ENCODE measurements at regions of chr9 and their contacts with region 1.

Region 1: DNA sequence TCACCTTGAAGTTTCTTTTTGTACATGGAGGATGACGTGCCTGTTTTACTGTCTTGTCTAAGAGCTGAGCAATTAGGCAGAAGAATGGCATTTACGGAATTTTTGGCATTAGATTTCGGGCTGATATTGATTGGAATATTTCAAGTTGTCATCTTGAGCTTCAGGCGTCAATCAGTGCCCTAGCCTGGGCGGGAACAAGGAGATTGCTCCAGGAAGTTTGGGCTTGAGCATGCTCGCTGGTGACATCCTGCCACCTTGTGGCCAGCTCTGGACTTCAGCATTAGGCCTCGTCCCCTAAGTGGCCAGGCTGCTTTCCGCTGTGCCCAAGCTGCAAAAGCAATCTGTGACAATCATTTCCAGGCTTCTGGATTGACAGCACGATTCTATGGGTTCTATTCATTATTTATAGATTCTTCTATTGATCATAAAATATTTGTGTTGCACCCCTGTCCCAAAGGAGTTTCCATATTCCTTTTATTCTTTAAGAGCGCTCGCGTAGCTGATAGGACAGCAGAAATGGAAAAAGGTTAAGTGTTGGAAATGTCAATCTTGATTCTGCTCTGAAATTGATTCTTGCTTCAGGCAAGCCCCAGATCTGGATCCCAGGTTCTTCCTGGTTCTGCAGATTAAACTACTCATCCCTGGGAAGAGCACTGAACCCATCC is 79.3 kb downstream of the SLC28A3 start:
- DNase-seq: peak; percentile 77
- H3K4me3 ChIP-seq: no peak overlapping the region
- H3K27ac ChIP-seq: no peak overlapping the region
- H3K4me1 ChIP-seq: no peaks in the 10 kb centered on the region
- H3K27me3 ChIP-seq: no peaks in the 10 kb centered on the region
- CTCF ChIP-seq: peak; percentile 62 to 87 (median 87)
- POLR2A ChIP-seq: no peak

Region 2: GRCh38 chr9:83081010-83081690 is 1180.1 kb before region 1 on chr9:
- intact Hi-C with region 1: no loop called
- DNase-seq: no peak
- H3K4me3 ChIP-seq: no peak overlapping the region
- H3K27ac ChIP-seq: no peak overlapping the region
- H3K4me1 ChIP-seq: no peaks in the 10 kb centered on the region
- H3K27me3 ChIP-seq: no peaks in the 10 kb centered on the region
- CTCF ChIP-seq: no peak
- POLR2A ChIP-seq: no peak

Region 3: DNA sequence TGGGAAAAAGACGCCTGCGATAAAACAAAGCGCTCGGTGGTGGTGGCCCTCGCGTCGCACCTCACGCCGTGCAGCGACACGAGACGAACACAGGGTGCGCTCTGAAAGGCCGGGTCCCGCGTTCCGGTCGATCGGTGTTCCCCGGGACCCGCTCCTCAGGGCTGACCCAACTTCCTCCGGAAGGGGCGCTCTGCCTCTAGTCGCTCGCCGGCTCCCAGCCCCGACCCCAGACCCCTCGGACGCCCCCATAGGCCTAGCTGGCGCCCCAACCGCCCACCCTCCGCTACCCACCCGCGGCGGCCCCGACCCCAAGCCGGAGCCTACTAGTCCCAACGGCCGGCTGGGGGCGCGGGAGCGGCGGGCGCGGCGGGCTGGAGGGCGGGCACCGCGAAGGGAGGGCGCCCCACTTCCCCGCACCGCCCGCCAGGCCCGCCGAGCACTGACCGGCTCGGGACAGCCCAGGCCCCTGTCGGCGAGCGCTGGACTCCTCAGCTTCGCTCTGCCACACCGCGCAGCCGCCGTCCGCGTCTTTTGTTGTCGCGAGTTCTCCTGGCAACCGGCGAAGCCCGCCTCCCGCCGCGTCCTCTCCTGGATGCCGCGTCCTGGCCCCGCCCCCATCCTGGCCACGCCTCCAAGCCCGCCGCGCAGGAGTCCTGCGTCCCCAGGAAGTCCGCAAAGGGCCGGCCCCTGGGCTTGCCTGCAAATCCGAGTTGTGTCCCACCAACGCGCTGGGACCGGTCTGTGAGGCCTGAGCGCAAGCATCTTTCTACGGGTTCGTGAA is 340.1 kb before region 1 on chr9 and contains the start of gene KIF27:
- intact Hi-C with region 1: loop called (anchors 5 kb)
- DNase-seq: peak; percentile 98
- H3K4me3 ChIP-seq: peak within 1 kb of the TSS; percentile 89 to 95
- H3K27ac ChIP-seq: peak within 1 kb of the TSS; percentile 95 to 96
- H3K4me1 ChIP-seq: no peaks in the 10 kb centered on the region
- H3K27me3 ChIP-seq: no peaks in the 10 kb centered on the region
- CTCF ChIP-seq: peak in 3 of 4 experiments; percentile 36 to 69 (median 66)
- POLR2A ChIP-seq: peak; percentile 83
- total RNA-seq, gene KIF27: 3.4 to 11.2 TPM

Region 4: GRCh38 chr9:83937911-83938323 is 323.3 kb before region 1 on chr9:
- intact Hi-C with region 1: loop called (anchors 1 kb)
- DNase-seq: peak; percentile 25
- H3K4me3 ChIP-seq: no peak overlapping the region
- H3K27ac ChIP-seq: no peak overlapping the region
- H3K4me1 ChIP-seq: peaks cover 4% of the 10 kb centered on the region
- H3K27me3 ChIP-seq: no peaks in the 10 kb centered on the region
- CTCF ChIP-seq: peak; percentile 33 to 75 (median 66)
- POLR2A ChIP-seq: no peak

Region 5: DNA sequence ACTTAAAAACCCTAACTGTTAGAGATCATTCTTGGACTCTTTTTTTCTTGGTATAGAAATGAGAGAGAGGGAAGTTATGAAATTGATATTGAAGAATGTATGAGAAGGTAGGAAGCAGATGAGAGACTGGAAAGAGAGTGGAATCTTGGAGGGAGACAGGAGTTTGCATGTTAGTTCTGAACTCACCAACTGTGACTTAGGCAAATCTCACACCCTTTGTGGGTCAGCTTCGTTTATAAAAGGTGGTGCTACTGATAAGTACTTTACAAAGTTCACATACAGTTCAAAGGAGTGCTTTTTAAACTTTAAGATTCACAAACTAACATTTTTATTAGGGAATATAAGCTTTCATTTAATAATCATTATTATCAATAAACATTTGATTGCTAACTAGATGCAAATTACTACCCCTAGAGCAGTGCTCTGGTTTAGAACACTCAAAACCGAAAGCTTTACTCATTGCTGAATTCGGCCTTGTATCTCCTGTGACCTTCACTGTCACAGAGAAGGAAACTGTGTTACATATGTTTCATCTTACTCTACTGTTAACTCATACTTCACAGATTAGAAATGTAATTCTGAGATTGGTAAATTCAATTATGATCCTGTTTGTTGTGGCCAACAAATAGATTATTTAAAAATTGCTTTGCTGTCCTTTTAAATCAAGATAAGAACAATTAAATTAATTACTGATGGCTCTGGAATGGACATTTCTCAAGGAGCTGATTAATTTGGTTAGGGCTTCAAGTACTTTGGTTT is 137.4 kb before region 1 on chr9:
- intact Hi-C with region 1: no loop called
- DNase-seq: no peak
- H3K4me3 ChIP-seq: no peak overlapping the region
- H3K27ac ChIP-seq: no peak overlapping the region
- H3K4me1 ChIP-seq: no peaks in the 10 kb centered on the region
- H3K27me3 ChIP-seq: no peaks in the 10 kb centered on the region
- CTCF ChIP-seq: no peak
- POLR2A ChIP-seq: no peak

Region 6: DNA sequence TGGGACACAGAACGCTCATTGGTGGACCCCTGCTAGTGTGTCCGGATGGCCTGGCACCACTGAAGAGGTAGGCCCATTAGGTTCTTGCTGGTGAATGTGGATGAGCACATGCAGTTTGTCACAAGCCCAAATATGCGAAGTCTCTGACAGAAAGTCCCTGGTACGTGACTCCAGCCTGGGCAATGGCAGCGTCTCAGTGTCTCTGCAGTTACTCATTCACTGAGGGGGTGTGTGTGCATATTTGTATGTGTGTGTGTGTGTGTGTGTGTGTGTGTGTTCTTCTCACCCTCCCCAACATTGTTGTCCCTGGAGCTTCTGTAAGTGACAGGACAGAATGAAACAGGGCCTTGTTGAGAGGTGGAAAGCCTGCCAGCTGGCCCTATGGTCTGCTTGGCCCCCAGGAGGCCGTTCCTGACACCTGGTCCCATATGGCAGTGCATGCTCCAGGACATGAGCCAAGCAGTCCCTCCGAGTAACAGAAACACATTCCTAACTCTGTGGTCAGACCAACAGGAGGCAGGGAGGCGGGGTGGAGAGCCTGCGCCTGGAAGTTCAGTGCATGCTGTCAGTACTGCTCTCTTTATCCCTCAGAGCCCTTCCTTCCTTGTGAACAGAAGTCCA is 90.6 kb before region 1 on chr9:
- intact Hi-C with region 1: loop called (anchors 10 kb)
- DNase-seq: peak; percentile 18
- H3K4me3 ChIP-seq: no peak overlapping the region
- H3K27ac ChIP-seq: no peak overlapping the region
- H3K4me1 ChIP-seq: no peaks in the 10 kb centered on the region
- H3K27me3 ChIP-seq: no peaks in the 10 kb centered on the region
- CTCF ChIP-seq: no peak
- POLR2A ChIP-seq: no peak

Region 7: GRCh38 chr9:84187090-84187489 is 74.1 kb before region 1 on chr9:
- intact Hi-C with region 1: no loop called
- DNase-seq: no peak
- H3K4me3 ChIP-seq: no peak overlapping the region
- H3K27ac ChIP-seq: no peak overlapping the region
- H3K4me1 ChIP-seq: no peaks in the 10 kb centered on the region
- H3K27me3 ChIP-seq: no peaks in the 10 kb centered on the region
- CTCF ChIP-seq: no peak
- POLR2A ChIP-seq: no peak

Region 8: DNA sequence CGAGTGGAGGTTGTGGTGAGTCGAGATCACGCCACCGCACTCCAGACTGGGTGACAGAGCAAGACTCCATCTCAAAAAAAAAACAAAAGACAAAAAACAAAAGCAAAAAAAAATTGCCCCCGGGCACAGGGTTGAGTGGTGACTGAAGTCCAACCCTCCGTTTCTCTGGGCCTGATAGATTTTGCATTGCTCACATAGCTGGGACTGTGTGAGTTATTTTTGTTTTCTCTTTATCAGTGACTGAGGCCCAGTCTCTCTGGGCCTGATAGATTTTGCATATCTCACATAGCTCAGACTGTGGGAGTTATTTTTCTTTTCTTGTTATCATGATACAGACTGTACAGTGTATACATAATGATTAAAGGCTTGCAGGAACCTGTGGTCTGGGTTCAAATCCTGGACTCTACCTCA is 81.9 kb after region 1 on chr9:
- intact Hi-C with region 1: no loop called
- DNase-seq: no peak
- H3K4me3 ChIP-seq: no peak overlapping the region
- H3K27ac ChIP-seq: no peak overlapping the region
- H3K4me1 ChIP-seq: no peaks in the 10 kb centered on the region
- H3K27me3 ChIP-seq: no peaks in the 10 kb centered on the region
- CTCF ChIP-seq: no peak
- POLR2A ChIP-seq: no peak